ENCODE measurements at regions of chr22 and their contacts with region 1.

Region 1: DNA sequence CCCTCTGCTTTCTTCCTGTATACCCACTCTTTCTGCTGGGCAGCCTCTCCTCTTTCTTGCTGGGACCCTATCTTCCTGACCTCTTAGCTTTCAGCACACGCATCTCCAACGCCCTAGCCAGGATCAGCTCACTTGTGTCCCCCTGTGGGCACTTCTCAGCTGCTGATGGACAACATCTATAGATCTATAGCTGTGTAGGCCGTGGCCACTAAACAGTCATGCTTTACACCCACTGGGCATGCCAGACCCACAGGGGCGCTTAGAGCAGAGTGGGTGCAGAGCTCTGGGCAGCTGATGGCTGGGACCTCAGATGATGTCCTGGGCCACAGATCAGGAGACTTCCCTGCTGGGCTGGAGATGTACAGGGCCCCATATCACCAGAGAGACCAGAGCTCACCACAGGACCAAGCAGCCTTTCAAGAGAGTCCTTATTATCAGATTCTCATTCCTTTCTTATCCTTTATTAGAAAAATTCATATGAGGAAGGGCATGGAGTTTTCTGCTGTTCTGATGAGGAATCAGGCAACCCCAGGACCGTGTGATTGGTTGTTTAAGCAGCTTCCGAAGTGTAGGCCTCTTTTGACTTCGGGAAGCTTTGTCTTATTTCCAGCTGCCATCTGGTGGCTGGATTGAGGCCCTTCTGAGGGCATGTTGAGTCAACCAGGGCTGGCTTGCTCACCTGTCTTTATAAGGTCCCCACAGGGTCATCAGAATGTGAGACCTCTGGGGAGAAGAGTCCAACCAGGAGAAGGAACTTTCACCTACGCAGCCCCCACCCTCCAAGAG is 60.5 kb downstream of the OSBP2 start:
- DNase-seq: peak; percentile 46
- H3K4me3 ChIP-seq: no peak overlapping the region
- CTCF ChIP-seq: peak; percentile 79

Region 2: GRCh38 chr22:30386960-30387827 is 368.0 kb before region 1 on chr22 and contains the start of gene RNF215:
- CTCF ChIA-PET with region 1: interaction called, 17 read pairs
- POLR2A ChIA-PET with region 1: no interaction called
- DNase-seq: no peak
- H3K4me3 ChIP-seq: peak within 1 kb of the TSS; percentile 73
- CTCF ChIP-seq: peak; percentile 91

Region 3: GRCh38 chr22:30556388-30556787 is 198.8 kb before region 1 on chr22:
- CTCF ChIA-PET with region 1: no interaction called
- POLR2A ChIA-PET with region 1: no interaction called
- DNase-seq: no peak
- H3K4me3 ChIP-seq: no peak overlapping the region
- CTCF ChIP-seq: no peak

Region 4: DNA sequence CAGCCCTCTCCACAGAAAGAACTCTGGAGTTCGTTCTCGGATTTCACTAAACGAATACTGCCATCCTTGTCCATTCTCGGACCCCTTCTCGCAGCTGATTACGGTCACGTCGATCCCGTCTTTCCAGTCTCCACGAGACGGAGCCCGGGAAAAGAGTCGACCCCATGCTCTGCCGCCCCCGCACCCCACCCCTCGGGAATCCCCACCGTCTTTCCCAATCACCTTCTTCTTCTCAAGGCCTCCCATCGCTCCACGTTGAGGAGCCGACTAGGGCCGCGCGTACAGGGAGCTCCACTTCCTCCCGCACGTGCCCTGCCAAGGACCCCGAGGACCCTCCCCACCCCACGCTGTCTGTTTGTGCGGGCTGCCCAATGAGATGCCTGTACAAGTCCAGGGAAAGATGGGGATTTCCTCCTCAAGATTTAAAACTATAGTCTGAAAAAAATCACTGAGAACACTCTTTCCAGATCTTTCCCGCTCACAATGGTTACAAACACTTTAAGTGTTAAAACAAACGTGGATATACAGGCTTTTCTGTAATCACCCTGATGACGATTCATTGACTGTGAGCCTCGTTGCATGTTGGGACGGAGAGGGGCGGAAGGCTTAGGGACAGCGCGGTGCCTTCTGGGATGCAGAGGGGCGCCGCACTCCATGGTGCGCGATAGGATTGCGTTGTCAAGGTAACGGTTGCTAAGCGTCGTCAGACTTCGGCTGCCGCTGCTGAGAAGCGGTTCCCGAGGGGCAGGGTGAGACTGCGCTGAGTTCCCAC is 163.4 kb before region 1 on chr22 and contains the start of gene PES1:
- CTCF ChIA-PET with region 1: interaction called, 21 read pairs
- POLR2A ChIA-PET with region 1: no interaction called
- DNase-seq: peak; percentile 95
- H3K4me3 ChIP-seq: peak within 1 kb of the TSS; percentile 80
- CTCF ChIP-seq: no peak

Region 5: GRCh38 chr22:30628491-30628890 is 126.7 kb before region 1 on chr22:
- CTCF ChIA-PET with region 1: interaction called, 518 read pairs
- POLR2A ChIA-PET with region 1: no interaction called
- DNase-seq: no peak
- H3K4me3 ChIP-seq: no peak overlapping the region
- CTCF ChIP-seq: no peak

Region 6: GRCh38 chr22:30662040-30662439 is 93.1 kb before region 1 on chr22:
- CTCF ChIA-PET with region 1: interaction called, 17 read pairs
- POLR2A ChIA-PET with region 1: no interaction called
- DNase-seq: no peak
- H3K4me3 ChIP-seq: no peak overlapping the region
- CTCF ChIP-seq: no peak

Region 7: GRCh38 chr22:30717331-30717921 is 37.7 kb before region 1 on chr22:
- CTCF ChIA-PET with region 1: interaction called, 14 read pairs
- POLR2A ChIA-PET with region 1: no interaction called
- DNase-seq: peak; percentile 49
- H3K4me3 ChIP-seq: no peak overlapping the region
- CTCF ChIP-seq: no peak

Region 8: GRCh38 chr22:30742291-30743256 is 12.6 kb before region 1 on chr22:
- CTCF ChIA-PET with region 1: interaction called, 67 read pairs
- POLR2A ChIA-PET with region 1: no interaction called
- DNase-seq: no peak
- H3K4me3 ChIP-seq: no peak overlapping the region
- CTCF ChIP-seq: no peak